ENCODE measurements at regions of chr5 and their contacts with region 1.

Region 1: DNA sequence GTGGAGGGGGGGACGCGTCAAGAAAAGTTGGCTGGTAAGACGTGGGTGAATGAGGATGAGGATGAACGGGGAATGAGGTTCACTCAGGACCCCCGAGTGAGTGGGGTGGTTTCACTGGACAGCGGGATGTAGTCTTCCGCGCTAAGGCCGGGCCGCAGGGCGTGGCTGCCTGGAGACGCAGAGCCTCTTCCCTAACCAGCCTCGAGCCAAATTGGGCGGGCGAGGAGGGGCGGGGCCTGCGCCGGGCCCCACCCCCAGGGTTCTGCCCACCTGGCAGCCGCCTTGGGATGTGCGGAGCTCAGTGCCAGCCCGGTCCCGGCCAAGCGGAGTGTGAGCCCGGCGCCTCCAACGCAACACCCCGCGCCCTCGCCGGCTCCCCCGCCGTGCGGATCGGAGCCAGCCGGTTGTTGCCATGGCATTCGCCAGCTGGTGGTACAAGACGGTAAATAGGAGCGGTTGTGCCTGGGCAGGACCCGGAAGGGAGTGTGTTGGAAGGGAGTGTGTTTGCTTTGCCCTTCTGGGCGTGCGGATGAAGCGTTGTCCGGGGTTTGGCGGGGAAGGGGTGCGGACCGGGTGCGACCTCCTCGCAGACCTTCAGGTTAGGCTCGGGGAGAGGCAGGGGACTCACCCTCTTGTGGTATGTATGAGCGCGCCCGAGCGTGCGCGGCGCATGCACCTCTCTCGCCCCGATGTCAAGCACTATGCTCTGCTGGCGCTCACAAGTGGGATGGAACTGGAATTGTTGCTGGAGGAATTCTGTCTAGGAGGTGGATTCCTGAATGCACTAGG is 743 bp downstream of the CAST start:
- DNase-seq: peak; percentile 92
- ATAC-seq: peak; percentile 80
- H3K4me3 Mint-ChIP-seq: peak overlapping the region; percentile 89
- H3K27ac Mint-ChIP-seq: peak overlapping the region; percentile 95
- H3K4me1 Mint-ChIP-seq: peaks cover 32% of the 10 kb centered on the region
- H3K27me3 Mint-ChIP-seq: peaks cover 6% of the 10 kb centered on the region

Region 2: DNA sequence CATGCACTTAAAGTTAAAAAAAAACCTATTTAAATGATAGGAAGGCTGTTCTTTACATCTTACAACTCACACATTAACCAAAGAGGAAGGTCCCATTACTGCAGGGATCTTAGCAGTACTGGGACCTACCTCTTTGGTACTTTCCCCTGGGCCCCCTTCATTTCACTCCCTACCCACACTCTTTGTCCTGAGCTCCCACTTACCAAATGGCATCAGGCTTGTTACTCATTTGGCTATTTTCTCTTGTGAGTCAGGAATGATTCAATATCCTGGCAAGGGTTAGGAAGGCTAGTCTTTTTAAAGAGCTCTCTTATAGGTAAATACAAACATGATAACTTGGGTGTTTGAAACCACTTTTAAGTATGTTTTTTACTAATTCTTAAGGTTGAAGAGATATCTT is 583.8 kb before region 1 on chr5:
- CTCF ChIA-PET with region 1: no interaction called
- POLR2A ChIA-PET with region 1: no interaction called
- intact Hi-C with region 1: loop called in 1 of 2 experiments (anchors 10 kb)
- DNase-seq: peak; percentile 66
- ATAC-seq: peak; percentile 97
- H3K4me3 Mint-ChIP-seq: no peak overlapping the region
- H3K27ac Mint-ChIP-seq: peak overlapping the region; percentile 83
- H3K4me1 Mint-ChIP-seq: peaks cover 42% of the 10 kb centered on the region
- H3K27me3 Mint-ChIP-seq: peaks cover 18% of the 10 kb centered on the region

Region 3: DNA sequence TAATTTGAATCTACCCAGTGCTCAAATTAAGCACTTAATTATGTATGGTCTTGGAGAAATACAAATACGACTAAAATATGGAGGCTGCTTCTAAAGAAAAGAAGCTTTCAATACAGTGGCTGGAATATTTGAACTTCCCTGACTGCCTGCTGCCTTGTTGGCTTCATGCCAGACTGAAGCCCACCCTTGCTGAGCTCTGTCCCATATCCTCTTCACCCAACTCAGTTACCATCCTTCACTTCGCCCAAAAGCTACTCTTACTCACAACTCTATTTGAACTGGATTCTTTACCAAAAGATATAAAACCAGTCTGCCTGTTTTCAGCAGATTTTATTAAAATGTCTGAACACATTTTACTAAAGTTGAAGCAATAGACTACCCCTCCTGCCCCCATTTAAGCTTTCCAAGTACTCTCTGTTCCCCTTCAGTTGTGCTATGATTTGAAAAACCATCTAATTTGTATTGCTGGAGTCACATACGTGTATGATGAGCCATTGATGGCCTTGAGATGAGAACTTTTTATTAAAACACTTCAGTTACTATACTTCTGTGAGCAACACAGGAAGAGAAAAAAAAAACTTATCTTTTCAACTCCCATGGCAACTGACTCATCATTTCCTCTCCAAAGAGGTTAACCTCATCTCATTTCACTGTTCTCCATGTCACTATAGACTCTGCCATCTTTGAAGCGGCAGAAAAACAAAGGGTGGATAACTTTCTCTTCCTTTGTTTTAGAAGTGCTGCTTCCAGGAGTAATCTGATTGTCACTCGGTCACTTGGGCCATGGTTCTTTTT is 125.7 kb before region 1 on chr5:
- CTCF ChIA-PET with region 1: no interaction called
- POLR2A ChIA-PET with region 1: no interaction called
- intact Hi-C with region 1: loop called in 1 of 2 experiments (anchors 5 kb)
- DNase-seq: no peak
- ATAC-seq: peak; percentile 86
- H3K4me3 Mint-ChIP-seq: peak overlapping the region; percentile 1
- H3K27ac Mint-ChIP-seq: peak overlapping the region; percentile 82
- H3K4me1 Mint-ChIP-seq: peaks cover 32% of the 10 kb centered on the region
- H3K27me3 Mint-ChIP-seq: no peaks in the 10 kb centered on the region

Region 4: DNA sequence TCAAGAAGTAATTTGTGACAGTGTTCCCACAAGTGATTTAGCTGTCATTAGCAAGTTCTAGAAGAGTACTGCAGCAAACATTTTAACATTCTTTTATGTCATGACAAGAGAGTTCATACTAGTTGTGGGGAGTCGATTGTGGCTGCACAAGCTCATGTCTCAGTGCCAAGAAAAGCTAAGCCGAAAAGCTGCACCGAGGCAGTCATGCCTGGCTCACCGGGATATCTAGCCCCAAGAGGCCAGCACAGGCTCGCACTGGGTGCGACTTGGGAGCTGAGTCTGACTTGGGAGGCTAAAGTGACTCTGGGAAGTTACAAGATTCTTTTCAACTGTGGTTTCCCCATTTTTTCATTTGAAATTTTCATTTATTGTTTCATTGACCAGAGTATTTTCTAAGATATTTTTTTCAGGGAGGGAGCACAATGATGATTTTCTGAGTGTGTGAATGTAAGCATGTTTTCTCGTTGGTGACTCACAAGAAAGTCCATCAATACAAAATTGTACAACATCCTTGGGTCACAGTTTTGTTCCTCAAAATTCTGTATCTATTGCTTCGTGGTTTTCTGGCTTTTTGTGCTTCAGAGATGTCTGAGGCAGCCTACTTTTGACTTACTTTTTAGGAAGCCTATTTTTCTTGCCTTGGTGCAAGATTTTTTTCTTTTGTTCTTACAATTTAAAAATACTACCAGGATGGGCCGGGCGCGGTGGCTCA is 18.0 kb after region 1 on chr5:
- CTCF ChIA-PET with region 1: no interaction called
- POLR2A ChIA-PET with region 1: no interaction called
- intact Hi-C with region 1: no loop called
- DNase-seq: no peak
- ATAC-seq: no peak
- H3K4me3 Mint-ChIP-seq: no peak overlapping the region
- H3K27ac Mint-ChIP-seq: no peak overlapping the region
- H3K4me1 Mint-ChIP-seq: peaks cover 17% of the 10 kb centered on the region
- H3K27me3 Mint-ChIP-seq: no peaks in the 10 kb centered on the region

Region 5: DNA sequence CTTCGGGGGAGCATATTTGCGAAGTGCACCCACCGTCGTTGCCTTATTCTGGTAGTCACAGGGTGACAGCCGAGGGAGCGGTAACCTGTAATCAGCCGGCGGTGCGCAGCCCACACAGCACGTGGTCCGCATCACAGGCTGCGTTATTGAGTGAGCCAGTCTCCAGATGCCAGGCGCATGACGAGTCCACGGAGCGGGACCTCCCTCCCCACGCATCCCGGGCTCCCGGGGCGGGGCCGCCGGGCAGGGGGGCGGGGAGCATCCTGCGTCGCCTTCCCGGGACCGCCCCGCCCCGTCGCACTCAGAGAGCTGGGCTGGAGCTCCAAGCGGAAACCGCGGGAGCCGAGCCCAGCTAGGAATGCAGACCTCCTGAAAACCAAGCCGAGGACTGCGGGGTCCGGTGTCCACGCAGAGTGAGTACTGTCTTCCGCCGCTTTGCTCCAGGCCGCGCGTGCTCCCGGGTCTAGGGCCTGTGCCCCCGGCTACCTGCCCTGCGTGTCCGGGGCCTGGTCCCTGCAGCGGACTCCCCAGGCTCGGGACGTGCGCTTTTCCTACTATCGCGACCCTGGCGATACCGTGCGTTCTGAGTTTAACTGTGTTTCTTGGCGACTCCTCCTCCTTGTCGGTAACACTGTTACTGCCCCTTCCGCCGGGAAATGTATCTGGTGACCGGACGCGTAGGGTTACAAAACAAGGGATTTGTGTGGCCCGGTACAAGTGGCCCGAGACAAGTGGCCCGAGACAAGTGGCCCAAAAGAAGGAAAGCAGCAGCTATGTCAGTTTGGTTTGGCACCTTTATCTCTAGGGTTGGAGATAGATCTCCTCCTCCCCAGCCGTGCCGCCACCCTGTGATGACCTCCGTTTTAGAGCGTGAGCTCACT is 39.8 kb after region 1 on chr5:
- CTCF ChIA-PET with region 1: interaction called, 5 read pairs
- POLR2A ChIA-PET with region 1: interaction called, 9 read pairs
- intact Hi-C with region 1: loop called (anchors 1 kb)
- DNase-seq: peak; percentile 92
- ATAC-seq: peak; percentile 78
- H3K4me3 Mint-ChIP-seq: peak overlapping the region; percentile 91
- H3K27ac Mint-ChIP-seq: peak overlapping the region; percentile 81
- H3K4me1 Mint-ChIP-seq: peaks cover 51% of the 10 kb centered on the region
- H3K27me3 Mint-ChIP-seq: no peaks in the 10 kb centered on the region

Region 6: DNA sequence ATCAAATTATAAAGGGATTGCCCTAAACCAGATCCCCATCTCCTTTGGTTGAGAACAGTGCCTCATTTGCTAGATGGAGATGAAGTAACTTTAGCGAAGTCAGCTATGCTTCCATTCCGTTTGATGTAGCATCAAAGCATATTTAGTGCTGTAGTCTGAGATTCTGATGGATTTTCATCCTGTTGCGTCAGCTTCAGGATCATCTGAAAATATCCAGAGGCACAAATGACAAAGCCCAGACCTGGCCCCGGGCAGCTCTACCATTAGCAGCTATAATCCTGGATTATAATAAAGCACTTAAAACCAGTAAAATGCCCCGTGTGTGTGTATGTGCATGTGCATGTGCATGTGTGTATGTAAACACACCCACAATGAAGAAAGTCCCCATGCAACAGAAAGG is 100.1 kb after region 1 on chr5:
- CTCF ChIA-PET with region 1: no interaction called
- POLR2A ChIA-PET with region 1: no interaction called
- intact Hi-C with region 1: no loop called
- DNase-seq: no peak
- ATAC-seq: no peak
- H3K4me3 Mint-ChIP-seq: no peak overlapping the region
- H3K27ac Mint-ChIP-seq: no peak overlapping the region
- H3K4me1 Mint-ChIP-seq: no peaks in the 10 kb centered on the region
- H3K27me3 Mint-ChIP-seq: no peaks in the 10 kb centered on the region

Region 7: GRCh38 chr5:96823900-96824351 is 161.0 kb after region 1 on chr5:
- CTCF ChIA-PET with region 1: no interaction called
- POLR2A ChIA-PET with region 1: no interaction called
- intact Hi-C with region 1: no loop called
- DNase-seq: no peak
- ATAC-seq: peak; percentile 93
- H3K4me3 Mint-ChIP-seq: no peak overlapping the region
- H3K27ac Mint-ChIP-seq: no peak overlapping the region
- H3K4me1 Mint-ChIP-seq: peaks cover 36% of the 10 kb centered on the region
- H3K27me3 Mint-ChIP-seq: no peaks in the 10 kb centered on the region

Region 8: GRCh38 chr5:96963267-96963666 is 300.3 kb after region 1 on chr5:
- CTCF ChIA-PET with region 1: no interaction called
- POLR2A ChIA-PET with region 1: no interaction called
- intact Hi-C with region 1: loop called in 1 of 2 experiments (anchors 10 kb)
- DNase-seq: peak; percentile 46
- ATAC-seq: peak; percentile 76
- H3K4me3 Mint-ChIP-seq: peak overlapping the region; percentile 64
- H3K27ac Mint-ChIP-seq: peak overlapping the region; percentile 97
- H3K4me1 Mint-ChIP-seq: peaks cover 75% of the 10 kb centered on the region
- H3K27me3 Mint-ChIP-seq: no peaks in the 10 kb centered on the region

Region 9: DNA sequence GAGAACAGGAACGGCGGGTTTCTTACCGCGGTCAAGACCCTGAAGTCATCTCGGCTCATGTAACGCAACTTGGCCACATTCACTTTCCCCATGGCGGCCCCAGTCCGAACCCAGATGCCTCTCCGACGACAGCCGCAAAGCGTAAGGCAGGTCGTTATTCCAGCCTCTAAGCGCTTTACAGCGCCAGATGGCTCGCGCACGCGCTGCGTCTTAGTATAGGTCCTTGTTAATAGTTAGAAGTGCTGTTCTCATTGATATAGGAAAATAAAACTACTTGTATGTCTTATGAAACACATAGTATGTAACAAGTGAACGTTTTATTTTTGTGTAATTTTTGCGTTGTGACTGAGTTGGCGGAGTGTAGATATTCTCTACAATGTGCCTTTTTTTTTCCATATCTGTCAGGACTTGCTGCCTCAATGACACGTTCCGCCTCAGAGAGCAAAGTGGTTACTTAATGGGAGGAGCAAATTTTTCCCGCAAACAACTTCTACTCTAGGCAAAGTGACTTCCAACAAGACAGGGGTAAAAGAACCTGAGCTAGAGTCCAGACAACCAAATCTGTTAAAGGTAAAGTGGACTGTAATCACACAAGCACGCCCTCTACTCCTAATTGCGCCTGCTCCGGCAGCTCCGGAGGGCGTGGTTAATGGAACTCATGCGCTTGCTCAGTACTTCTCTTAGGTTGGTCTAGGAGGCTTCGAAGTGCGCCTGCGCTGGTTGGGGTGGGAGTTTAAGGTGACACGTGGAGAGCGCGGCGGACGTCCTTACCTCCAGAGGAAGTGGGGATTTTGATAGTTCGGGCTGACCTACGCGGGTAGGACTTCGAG is 520.4 kb after region 1 on chr5 and contains the start of gene RIOK2:
- CTCF ChIA-PET with region 1: no interaction called
- POLR2A ChIA-PET with region 1: no interaction called
- intact Hi-C with region 1: loop called (anchors 1 to 5 kb)
- DNase-seq: peak; percentile 96
- ATAC-seq: peak; percentile 94
- H3K4me3 Mint-ChIP-seq: peak within 1 kb of the TSS; percentile 82
- H3K27ac Mint-ChIP-seq: peak within 1 kb of the TSS; percentile 100
- H3K4me1 Mint-ChIP-seq: peaks cover 33% of the 10 kb centered on the region
- H3K27me3 Mint-ChIP-seq: no peaks in the 10 kb centered on the region
- total RNA-seq, gene RIOK2: 30.9 to 39.2 TPM